Heart left ventricle (tissue), 16 donors: ENCODE measurements at regions of chr18 and their contacts with region 1.

Region 1: DNA sequence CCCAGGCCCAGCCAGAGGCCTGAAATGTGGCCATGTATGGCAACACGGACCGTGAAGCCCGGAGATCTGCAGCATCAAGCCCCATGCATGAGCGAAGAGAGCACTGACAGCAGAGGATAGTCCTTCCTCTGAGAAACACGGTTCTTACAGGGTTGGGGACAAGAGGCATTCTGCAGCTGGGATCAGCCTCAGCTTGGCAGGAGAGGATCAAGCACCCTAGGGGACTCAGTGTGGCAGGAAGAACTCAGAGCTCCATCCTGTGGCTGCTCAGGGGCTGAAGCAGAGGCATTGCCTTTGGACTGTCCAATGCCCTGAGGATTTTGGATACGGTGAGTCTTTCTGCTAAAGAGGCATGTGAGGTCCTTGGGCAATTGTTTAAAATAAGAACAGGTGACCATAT is 368.7 kb downstream of the ZNF516 start:
- DNase-seq: peak in 1 of 5 donors; percentile 34
- ATAC-seq: peak in 3 of 4 donors; percentile 65 to 78 (median 74)
- H3K4me3 ChIP-seq: no peak overlapping the region
- H3K27ac ChIP-seq: no peak overlapping the region
- H3K4me1 ChIP-seq: no peaks in the 10 kb centered on the region
- H3K27me3 ChIP-seq: no peaks in the 10 kb centered on the region
- CTCF ChIP-seq: peak in 10 of 12 donors; percentile 6 to 42 (median 26)
- POLR2A ChIP-seq: no peak

Region 2: DNA sequence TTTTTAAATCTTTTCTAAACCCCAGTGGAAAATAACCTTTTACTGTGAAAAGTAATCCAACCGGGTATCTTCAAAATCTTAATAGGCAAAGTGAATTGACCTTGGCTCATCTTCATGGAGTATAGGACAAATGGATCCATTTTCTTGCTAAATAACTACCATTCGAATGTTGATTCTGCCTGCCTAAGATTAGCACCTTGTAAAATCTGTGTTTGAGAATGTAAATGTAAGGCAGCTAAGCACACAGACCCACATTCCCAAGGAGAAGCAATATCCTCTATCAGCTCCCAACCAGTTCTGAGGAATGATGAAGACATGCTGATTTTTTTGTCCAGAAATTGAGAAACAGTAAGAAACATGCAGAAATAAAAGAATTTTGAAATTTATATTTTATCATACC is 189.0 kb before region 1 on chr18:
- intact Hi-C with region 1: no loop called
- DNase-seq: no peak
- ATAC-seq: no peak
- H3K4me3 ChIP-seq: no peak overlapping the region
- H3K27ac ChIP-seq: no peak overlapping the region
- H3K4me1 ChIP-seq: no peaks in the 10 kb centered on the region
- H3K27me3 ChIP-seq: no peaks in the 10 kb centered on the region
- CTCF ChIP-seq: no peak
- POLR2A ChIP-seq: no peak

Region 3: DNA sequence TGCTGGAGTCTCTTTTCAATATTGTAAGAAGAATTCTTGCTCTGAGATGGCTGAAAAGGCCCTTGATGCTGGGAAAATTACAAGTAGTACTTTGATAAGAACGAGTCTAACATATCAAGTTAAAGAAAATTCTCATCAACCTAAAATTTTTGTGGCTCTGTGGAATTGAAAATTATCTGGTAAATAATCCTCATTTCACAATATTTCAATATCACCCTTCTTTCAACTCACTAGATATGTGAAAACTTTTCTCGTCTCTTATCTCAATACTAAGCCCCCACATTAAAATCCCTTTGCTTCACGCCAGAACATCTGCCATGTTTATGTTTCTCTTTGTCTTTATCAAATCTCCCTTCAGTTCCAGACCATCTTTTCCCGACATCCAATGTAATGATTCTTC is 80.1 kb before region 1 on chr18:
- intact Hi-C with region 1: no loop called
- DNase-seq: no peak
- ATAC-seq: no peak
- H3K4me3 ChIP-seq: no peak overlapping the region
- H3K27ac ChIP-seq: no peak overlapping the region
- H3K4me1 ChIP-seq: no peaks in the 10 kb centered on the region
- H3K27me3 ChIP-seq: no peaks in the 10 kb centered on the region
- CTCF ChIP-seq: no peak
- POLR2A ChIP-seq: no peak

Region 4: DNA sequence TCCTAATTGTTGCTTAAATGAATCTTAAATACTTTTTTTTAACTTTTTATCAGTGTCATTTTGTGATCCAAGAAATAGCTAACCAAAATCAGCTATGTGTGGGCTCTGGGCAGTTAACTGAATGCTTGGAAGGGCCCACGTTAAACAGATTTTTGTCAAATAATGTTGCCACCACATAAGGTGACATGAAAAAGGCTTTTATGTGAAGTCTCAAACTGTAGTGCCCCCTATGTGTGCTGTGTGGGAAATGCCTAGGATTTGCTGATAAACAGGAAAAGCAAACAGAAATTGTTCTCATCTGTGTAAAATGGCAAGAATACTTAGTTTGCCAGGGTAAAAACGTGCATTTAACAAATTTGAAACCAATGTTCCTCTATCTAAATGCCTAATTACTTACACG is 126.6 kb after region 1 on chr18:
- intact Hi-C with region 1: loop called in 1 of 10 experiments (anchors 10 kb)
- DNase-seq: no peak
- ATAC-seq: no peak
- H3K4me3 ChIP-seq: no peak overlapping the region
- H3K27ac ChIP-seq: no peak overlapping the region
- H3K4me1 ChIP-seq: peaks cover 0 to 7% (median 0%) of the 10 kb centered on the region in 12 donors
- H3K27me3 ChIP-seq: peaks cover 0 to 16% (median 0%) of the 10 kb centered on the region in 9 donors
- CTCF ChIP-seq: peak in 5 of 12 donors; percentile 26 to 53 (median 46)
- POLR2A ChIP-seq: no peak